ENCODE measurements at regions of chr13 and their contacts with region 1.

Region 1: DNA sequence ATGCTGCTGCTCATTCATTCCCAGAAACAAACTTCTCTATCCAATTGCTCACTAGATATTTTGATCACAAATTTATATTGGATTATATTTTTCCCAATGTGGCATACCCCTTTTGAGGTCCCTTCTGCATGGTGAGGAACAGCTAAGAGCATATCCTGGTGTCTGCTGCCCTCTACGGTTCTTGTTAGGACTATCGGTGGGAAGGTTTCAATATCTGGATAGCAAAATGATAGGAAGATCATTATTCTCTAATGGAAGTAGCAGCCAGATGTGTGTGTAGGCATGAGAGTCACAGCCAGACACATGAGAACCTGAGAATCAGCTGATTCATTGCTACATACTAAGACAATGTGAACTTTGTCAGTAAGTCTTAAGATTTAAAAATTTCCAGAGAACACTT is 1422.4 kb upstream of the MIR17HG start:
- DNase-seq: peak; percentile 32
- ATAC-seq: peak; percentile 78
- H3K4me3 ChIP-seq: no peak overlapping the region
- H3K27ac ChIP-seq: no peak overlapping the region
- H3K4me1 ChIP-seq: peaks cover under 1% of the 10 kb centered on the region; the same call in 1 of the 2 replicates
- H3K27me3 ChIP-seq: no peaks in the 10 kb centered on the region; a peak in 1 of 5 replicates
- CTCF ChIP-seq: peak; percentile 70
- EP300 ChIP-seq: no peak
- POLR2A ChIP-seq: no peak
- RAD21 ChIP-seq: no peak

Region 2: DNA sequence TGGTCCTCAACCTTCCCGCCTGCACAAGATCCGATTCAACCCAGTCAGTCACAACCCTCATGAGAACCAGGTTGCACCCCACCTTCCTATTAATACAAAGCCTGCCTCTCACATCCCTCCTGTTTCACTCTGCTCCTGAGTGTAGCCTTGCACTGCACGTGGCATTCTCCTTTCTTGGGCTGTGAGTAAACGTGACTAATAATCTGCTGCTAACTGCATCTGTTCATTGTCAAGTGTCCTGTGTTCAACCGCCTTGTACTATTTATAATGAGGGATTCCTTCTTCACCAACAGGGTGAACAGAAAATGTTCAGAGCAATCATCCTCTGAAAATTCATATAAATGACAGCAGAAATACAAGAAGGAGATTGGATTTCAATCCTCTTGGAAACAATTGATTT is 645.7 kb before region 1 on chr13:
- CTCF ChIA-PET with region 1: no interaction called
- POLR2A ChIA-PET with region 1: no interaction called
- in situ Hi-C with region 1: no loop called
- intact Hi-C with region 1: no loop called
- DNase-seq: no peak
- ATAC-seq: no peak
- H3K4me3 ChIP-seq: no peak overlapping the region
- H3K27ac ChIP-seq: no peak overlapping the region
- H3K4me1 ChIP-seq: no peaks in the 10 kb centered on the region
- H3K27me3 ChIP-seq: no peaks in the 10 kb centered on the region
- CTCF ChIP-seq: no peak
- EP300 ChIP-seq: no peak
- POLR2A ChIP-seq: no peak
- RAD21 ChIP-seq: no peak

Region 3: GRCh38 chr13:89361909-89362308 is 563.2 kb before region 1 on chr13:
- CTCF ChIA-PET with region 1: no interaction called
- POLR2A ChIA-PET with region 1: no interaction called
- in situ Hi-C with region 1: no loop called
- intact Hi-C with region 1: loop called (anchors 1 kb)
- DNase-seq: no peak
- ATAC-seq: no peak
- H3K4me3 ChIP-seq: no peak overlapping the region
- H3K27ac ChIP-seq: no peak overlapping the region
- H3K4me1 ChIP-seq: no peaks in the 10 kb centered on the region
- H3K27me3 ChIP-seq: no peaks in the 10 kb centered on the region; a peak in 1 of 5 replicates
- CTCF ChIP-seq: no peak
- EP300 ChIP-seq: no peak
- POLR2A ChIP-seq: no peak
- RAD21 ChIP-seq: no peak

Region 4: DNA sequence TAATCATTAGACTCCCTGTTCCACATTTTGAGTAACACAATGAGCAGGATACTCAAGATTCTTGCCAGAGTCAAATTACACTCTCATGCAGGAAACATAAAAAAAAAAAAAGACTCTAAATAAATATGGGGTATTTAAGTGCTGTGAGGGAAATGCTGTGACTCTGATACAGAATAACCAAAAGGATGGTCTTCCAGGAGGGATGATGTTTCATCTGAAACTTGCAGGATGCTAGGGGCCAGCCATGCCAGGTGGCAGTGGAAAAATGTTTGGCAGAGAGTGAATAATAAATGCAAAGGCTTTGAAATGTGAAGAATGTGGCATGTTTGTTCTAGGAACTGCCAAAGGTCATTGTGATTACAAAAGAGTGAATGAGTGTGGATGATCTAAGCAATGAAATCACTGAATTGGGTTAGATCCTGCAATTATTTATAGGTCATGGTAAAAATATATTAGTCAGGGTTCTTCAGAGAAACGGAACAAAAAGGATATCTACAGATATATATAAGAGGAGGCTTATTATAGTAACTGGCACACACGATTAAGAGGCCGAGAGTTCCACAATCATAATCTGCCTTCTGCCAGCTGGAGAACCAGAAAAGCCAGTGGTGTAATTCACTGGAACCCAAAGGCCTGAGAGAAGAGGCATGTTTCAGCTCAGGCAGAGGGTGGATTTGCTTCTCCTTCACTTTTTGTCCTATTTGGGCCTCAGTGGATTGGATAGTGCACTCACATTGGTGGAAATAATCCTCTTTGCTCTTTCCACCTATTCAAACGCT is 410.4 kb before region 1 on chr13:
- CTCF ChIA-PET with region 1: no interaction called
- POLR2A ChIA-PET with region 1: no interaction called
- in situ Hi-C with region 1: no loop called
- intact Hi-C with region 1: no loop called
- DNase-seq: peak; percentile 50
- ATAC-seq: peak; percentile 92
- H3K4me3 ChIP-seq: no peak overlapping the region
- H3K27ac ChIP-seq: no peak overlapping the region
- H3K4me1 ChIP-seq: peaks cover 10% of the 10 kb centered on the region
- H3K27me3 ChIP-seq: no peaks in the 10 kb centered on the region
- CTCF ChIP-seq: no peak
- EP300 ChIP-seq: no peak
- POLR2A ChIP-seq: no peak
- RAD21 ChIP-seq: no peak

Region 5: DNA sequence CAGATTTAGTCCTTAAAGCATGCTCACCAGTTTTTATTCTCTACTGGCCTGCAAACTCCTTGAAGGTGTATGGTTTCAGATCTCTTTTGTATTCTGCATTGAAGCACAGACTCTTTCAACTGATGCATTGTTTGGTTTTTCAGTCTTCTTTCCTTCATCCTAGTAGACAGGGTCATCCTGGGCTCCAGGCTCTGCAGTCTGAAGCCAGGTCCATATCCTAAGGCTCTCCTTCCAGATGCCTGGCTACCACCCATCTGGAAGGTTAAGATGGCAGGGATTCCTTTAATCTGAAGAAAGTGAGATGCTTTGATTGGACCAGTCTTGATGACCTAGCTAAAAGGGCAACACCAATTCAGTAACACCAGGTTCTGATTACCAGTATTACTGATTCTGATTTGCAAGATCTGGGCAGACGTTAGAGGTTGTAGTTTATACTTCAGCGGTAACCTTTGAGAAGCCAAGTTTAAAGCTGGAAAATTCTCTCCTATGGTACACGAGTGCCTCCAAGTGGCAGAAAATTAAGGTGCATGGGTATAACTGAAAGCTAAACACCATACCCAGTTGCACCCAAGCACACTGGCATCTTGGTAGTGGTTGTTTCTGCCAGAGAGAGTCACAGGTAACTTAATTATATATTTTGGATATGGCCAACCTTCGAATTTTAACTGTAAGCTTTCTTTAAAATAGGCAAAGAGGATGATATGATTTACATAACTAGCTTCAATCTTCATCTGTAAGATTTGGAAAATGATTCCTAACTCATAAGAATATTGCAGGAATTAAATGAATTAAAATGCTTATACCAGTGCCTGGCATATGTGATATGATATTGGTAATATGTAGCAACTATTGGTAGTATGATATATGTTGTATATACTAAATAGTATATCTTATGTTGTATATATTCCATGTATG is 229.5 kb before region 1 on chr13:
- CTCF ChIA-PET with region 1: no interaction called
- POLR2A ChIA-PET with region 1: no interaction called
- in situ Hi-C with region 1: no loop called
- intact Hi-C with region 1: loop called (anchors 2 kb)
- DNase-seq: peak; percentile 9
- ATAC-seq: peak; percentile 77
- H3K4me3 ChIP-seq: no peak overlapping the region
- H3K27ac ChIP-seq: no peak overlapping the region
- H3K4me1 ChIP-seq: no peaks in the 10 kb centered on the region
- H3K27me3 ChIP-seq: no peaks in the 10 kb centered on the region
- CTCF ChIP-seq: peak; percentile 70
- EP300 ChIP-seq: no peak
- POLR2A ChIP-seq: no peak
- RAD21 ChIP-seq: no peak

Region 6: DNA sequence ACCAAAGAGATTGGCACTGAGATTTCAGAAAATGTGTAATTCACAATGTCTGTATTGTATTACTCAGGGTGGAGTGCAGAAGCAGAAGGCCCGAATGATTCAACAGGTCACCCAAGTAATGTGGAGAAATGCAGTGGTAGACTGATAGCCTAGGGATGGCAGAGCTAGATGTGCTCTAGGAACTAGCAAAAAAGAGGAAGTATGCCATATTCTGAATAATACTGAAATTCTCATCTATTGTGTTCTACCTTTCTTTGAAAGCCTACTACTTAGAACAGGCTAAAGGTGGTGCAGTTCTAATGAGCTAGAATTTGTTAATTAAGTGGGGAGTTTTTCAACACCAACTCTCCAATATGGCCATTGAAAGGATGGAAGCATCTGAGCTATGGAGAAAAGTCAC is 27.4 kb before region 1 on chr13:
- CTCF ChIA-PET with region 1: no interaction called
- POLR2A ChIA-PET with region 1: no interaction called
- in situ Hi-C with region 1: no loop called
- intact Hi-C with region 1: loop called (anchors 2 kb)
- DNase-seq: no peak
- ATAC-seq: no peak
- H3K4me3 ChIP-seq: no peak overlapping the region
- H3K27ac ChIP-seq: no peak overlapping the region
- H3K4me1 ChIP-seq: peaks cover 36% of the 10 kb centered on the region
- H3K27me3 ChIP-seq: no peaks in the 10 kb centered on the region
- CTCF ChIP-seq: no peak
- EP300 ChIP-seq: no peak
- POLR2A ChIP-seq: no peak
- RAD21 ChIP-seq: no peak

Measured in HepG2 (cell line).